WTC11 (cell line): ENCODE measurements at regions of chr11 and their contacts with region 1.

Region 1: DNA sequence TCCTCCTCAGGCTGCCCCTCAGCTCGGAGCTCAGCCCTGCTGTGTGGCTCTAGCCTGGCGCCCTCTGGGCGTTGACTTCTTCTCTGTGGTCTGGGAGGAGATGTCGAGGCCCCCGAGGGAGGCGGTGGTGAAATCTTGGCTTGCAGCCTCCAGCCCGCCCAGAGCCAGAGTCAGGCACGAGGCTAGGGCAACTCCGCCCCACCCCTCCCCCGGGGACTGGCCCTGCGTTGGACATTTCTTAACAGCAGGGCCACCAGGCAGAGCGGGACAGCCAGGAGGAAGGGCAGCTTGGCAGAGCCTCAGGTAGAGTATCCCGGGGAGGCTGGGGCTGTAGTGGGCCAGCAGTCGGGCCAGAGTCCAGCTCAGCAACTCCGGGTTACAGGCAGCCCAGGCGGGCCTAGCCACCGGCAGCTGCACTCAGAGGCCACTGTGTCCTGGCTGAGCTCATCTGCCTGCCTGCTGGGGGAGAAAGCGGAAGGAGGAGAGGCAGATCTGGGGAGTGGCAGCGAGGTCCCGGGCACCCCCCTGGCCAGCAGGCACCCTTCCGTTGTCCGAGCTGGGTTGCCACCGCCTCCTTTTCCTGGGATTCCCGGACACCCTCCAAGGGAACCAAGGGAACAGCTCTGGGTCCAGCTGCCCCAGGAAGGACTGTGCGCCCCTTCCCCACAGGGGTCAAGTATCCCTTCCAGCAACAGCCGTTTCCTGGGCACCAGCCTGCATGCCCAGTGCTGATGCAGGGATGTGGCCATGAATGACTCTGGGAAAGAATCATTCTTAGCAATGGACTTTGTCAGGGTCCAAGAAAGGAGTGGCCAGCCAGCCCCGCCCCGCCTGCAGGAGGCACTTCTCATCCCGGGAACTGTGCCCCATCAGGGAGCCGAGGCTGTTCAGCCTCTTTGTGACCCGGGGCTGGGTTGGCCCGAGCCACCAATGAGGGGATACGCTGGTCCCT is at the start of gene ALDH3B1:
- DNase-seq: peak; percentile 53
- ATAC-seq: peak; percentile 66
- H3K4me3 Mint-ChIP-seq: no peak within 1 kb of the TSS
- H3K27ac Mint-ChIP-seq: peak within 1 kb of the TSS; percentile 60; the same call in 1 of the 2 replicates
- H3K4me1 Mint-ChIP-seq: peaks cover 19% of the 10 kb centered on the region
- H3K27me3 Mint-ChIP-seq: no peaks in the 10 kb centered on the region
- CTCF ChIP-seq: no peak
- total RNA-seq, gene ALDH3B1: 0.30 to 0.53 TPM (median 0.46 TPM) in 3 replicates

Region 2: GRCh38 chr11:67996622-67997474 is 13.5 kb before region 1 on chr11:
- CTCF ChIA-PET with region 1: interaction called, 12 read pairs
- POLR2A ChIA-PET with region 1: interaction called, 6 read pairs
- DNase-seq: peak; percentile 98
- ATAC-seq: peak; percentile 95
- H3K4me3 Mint-ChIP-seq: peak overlapping the region; percentile 75
- H3K27ac Mint-ChIP-seq: peak overlapping the region; percentile 67
- H3K4me1 Mint-ChIP-seq: peaks cover 17% of the 10 kb centered on the region
- H3K27me3 Mint-ChIP-seq: peaks cover 6% of the 10 kb centered on the region
- CTCF ChIP-seq: no peak

Region 3: DNA sequence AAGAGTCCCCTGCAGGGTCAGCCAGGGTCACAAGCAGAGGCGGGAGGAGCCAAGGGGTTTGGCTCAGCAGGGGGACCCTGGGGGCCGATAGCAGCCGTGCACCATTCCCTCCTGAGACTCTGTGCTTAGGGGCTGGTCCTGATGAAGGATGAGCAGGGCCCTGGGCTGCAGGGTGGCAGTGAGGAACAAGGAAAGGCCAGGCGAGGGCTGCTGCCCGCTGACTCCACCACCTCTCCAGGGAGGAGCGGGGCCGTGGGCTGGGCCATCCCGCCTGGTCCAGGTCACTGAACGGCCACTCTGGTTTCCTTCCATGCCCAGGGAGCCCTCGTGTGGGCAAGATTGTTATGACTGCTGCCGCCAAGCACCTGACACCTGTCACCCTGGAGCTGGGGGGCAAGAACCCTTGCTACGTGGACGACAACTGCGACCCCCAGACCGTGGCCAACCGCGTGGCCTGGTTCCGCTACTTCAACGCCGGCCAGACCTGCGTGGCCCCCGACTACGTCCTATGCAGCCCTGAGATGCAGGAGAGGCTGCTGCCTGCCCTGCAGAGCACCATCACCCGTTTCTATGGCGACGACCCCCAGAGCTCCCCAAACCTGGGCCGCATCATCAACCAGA is 10.9 kb after region 1 on chr11:
- CTCF ChIA-PET with region 1: interaction called, 11 read pairs
- POLR2A ChIA-PET with region 1: no interaction called
- DNase-seq: peak; percentile 53
- ATAC-seq: peak; percentile 32
- H3K4me3 Mint-ChIP-seq: no peak overlapping the region
- H3K27ac Mint-ChIP-seq: no peak overlapping the region
- H3K4me1 Mint-ChIP-seq: peaks cover 8% of the 10 kb centered on the region
- H3K27me3 Mint-ChIP-seq: no peaks in the 10 kb centered on the region
- CTCF ChIP-seq: no peak

Region 4: DNA sequence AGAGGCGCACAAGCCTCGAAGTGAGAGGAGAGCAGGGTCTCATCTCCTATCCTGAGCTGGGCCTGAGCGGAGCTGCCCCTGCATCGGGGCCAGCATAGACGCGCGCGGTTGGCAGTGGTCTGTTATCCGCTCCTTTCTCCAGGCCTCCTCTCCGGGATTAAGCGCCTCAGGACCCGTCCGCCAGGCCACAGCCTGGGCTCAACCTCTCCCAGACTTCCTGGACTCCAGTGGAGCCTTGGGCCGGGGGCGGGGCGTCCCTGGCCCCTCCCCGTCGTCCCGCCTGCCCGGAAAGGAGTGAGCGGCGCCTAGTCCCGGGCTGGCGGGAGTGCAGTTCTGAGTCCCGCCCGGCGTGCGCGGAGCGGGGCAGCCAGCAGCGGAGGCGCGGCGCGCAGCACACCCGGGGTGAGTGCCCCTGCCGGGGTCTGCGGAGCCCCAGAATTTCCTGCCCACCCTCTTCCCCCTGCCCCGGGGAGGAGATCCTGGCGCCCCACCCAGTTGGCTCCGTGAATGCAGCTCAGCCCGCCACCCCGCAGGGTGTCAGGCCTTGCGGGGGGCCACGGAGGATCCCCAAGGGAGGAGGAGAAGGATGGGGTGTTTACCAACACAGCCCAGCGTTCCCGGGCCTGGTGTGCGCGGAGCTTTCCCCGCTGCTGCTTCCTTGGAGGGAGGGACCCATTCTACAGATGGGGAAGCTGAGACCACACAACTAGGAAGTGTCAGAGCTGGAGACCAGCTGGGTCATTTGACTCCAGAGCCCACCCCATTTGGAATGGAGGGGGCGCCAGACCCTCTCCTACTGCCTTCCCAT is 28.6 kb after region 1 on chr11 and contains the start of gene TCIRG1:
- CTCF ChIA-PET with region 1: interaction called, 11 read pairs
- POLR2A ChIA-PET with region 1: no interaction called
- DNase-seq: peak; percentile 73
- ATAC-seq: peak; percentile 70
- H3K4me3 Mint-ChIP-seq: peak within 1 kb of the TSS; percentile 55
- H3K27ac Mint-ChIP-seq: peak within 1 kb of the TSS; percentile 84; the same call in 1 of the 2 replicates
- H3K4me1 Mint-ChIP-seq: peaks cover 15% of the 10 kb centered on the region
- H3K27me3 Mint-ChIP-seq: no peaks in the 10 kb centered on the region
- CTCF ChIP-seq: no peak
- total RNA-seq, gene TCIRG1: 50.7 to 51.7 TPM (median 51.1 TPM) in 3 replicates

Region 5: GRCh38 chr11:68056317-68057285 is 46.2 kb after region 1 on chr11:
- CTCF ChIA-PET with region 1: no interaction called
- POLR2A ChIA-PET with region 1: no interaction called
- DNase-seq: no peak
- ATAC-seq: no peak
- H3K4me3 Mint-ChIP-seq: no peak overlapping the region
- H3K27ac Mint-ChIP-seq: peak overlapping the region; percentile 80
- H3K4me1 Mint-ChIP-seq: peaks cover 3% of the 10 kb centered on the region
- H3K27me3 Mint-ChIP-seq: no peaks in the 10 kb centered on the region
- CTCF ChIP-seq: no peak